WTC11 (cell line): ENCODE measurements at regions of chr6 and their contacts with region 1.

Region 1: DNA sequence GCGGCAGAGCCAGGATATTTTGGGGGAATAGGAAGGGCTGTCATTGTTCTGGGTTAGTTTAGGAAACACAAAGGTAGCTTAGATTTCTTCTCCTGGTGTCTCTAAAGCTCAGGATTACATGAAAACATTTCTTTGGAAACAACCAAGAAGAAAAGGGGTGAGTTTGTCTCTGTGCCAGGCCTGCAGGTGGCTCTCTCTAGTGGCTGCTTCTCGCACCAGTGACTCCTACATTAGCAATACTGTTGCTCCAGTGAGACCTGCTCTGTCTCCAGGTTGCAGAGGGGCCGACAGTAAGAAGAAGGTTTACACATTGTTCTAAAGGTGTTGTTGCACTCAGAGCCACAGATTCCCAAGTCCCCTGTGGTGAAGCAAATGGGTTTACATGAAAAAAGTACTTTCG is 104.6 kb upstream of the GLP1R start:
- DNase-seq: peak; percentile 22
- ATAC-seq: peak; percentile 88
- H3K4me3 Mint-ChIP-seq: no peak overlapping the region
- H3K27ac Mint-ChIP-seq: no peak overlapping the region
- H3K4me1 Mint-ChIP-seq: 0 out of 2 replicates have a peak, but pooled peaks cover 3% of the 10 kb centered on the region
- H3K27me3 Mint-ChIP-seq: peaks cover 3% of the 10 kb centered on the region; the same call in 1 of the 2 replicates
- CTCF ChIP-seq: no peak

Region 2: GRCh38 chr6:38909015-38909730 is 34.8 kb before region 1 on chr6:
- CTCF ChIA-PET with region 1: no interaction called
- POLR2A ChIA-PET with region 1: no interaction called
- DNase-seq: no peak
- ATAC-seq: no peak
- H3K4me3 Mint-ChIP-seq: no peak overlapping the region
- H3K27ac Mint-ChIP-seq: no peak overlapping the region
- H3K4me1 Mint-ChIP-seq: peaks cover 3% of the 10 kb centered on the region; the same call in 1 of the 2 replicates
- H3K27me3 Mint-ChIP-seq: no peaks in the 10 kb centered on the region; the same call in 1 of the 2 replicates
- CTCF ChIP-seq: no peak

Region 3: GRCh38 chr6:39678914-39679313 is 735.0 kb after region 1 on chr6:
- CTCF ChIA-PET with region 1: no interaction called
- POLR2A ChIA-PET with region 1: no interaction called
- DNase-seq: no peak
- ATAC-seq: no peak
- H3K4me3 Mint-ChIP-seq: no peak overlapping the region
- H3K27ac Mint-ChIP-seq: no peak overlapping the region
- H3K4me1 Mint-ChIP-seq: no peaks in the 10 kb centered on the region
- H3K27me3 Mint-ChIP-seq: no peaks in the 10 kb centered on the region
- CTCF ChIP-seq: no peak

Region 4: DNA sequence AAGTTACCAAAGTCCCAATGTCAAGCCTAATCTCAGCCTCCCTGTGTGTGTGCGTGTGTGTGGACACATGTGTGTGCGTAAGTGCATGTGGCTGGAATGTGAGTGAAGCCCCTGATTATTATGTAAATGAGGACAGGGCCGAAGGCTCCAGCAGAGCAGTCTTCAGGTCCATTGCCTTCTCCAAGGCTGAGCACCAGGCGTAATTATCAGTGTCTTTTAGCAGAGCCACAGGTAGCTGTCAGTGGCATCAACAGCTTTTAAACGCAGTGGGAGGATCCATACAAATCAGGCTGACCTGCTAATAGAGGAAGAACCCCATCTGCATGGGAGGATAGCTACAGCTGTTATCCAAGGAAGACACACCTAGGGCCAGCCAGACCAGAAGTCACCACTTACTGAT is 1314.6 kb after region 1 on chr6:
- CTCF ChIA-PET with region 1: no interaction called
- POLR2A ChIA-PET with region 1: interaction called, 10 read pairs
- DNase-seq: no peak
- ATAC-seq: peak; percentile 43
- H3K4me3 Mint-ChIP-seq: no peak overlapping the region
- H3K27ac Mint-ChIP-seq: no peak overlapping the region
- H3K4me1 Mint-ChIP-seq: peaks cover 10% of the 10 kb centered on the region
- H3K27me3 Mint-ChIP-seq: no peaks in the 10 kb centered on the region; the same call in 1 of the 2 replicates
- CTCF ChIP-seq: no peak